ENCODE measurements at regions of chr1 and their contacts with region 1.

Region 1: GRCh38 chr1:190738321-190738720 is 260.7 kb upstream of the BRINP3 start:
- DNase-seq: no peak
- H3K4me3 Mint-ChIP-seq: no peak overlapping the region
- H3K27ac Mint-ChIP-seq: no peak overlapping the region
- H3K4me1 Mint-ChIP-seq: no peaks in the 10 kb centered on the region
- H3K27me3 Mint-ChIP-seq: no peaks in the 10 kb centered on the region

Region 2: GRCh38 chr1:192418552-192419285 is 1680.4 kb after region 1 on chr1:
- intact Hi-C with region 1: loop called (anchors 10 kb)
- DNase-seq: no peak
- H3K4me3 Mint-ChIP-seq: no peak overlapping the region
- H3K27ac Mint-ChIP-seq: no peak overlapping the region
- H3K4me1 Mint-ChIP-seq: no peaks in the 10 kb centered on the region
- H3K27me3 Mint-ChIP-seq: no peaks in the 10 kb centered on the region